Heart left ventricle (tissue), 16 donors: ENCODE measurements at regions of chr6 and their contacts with region 1.

Region 1: DNA sequence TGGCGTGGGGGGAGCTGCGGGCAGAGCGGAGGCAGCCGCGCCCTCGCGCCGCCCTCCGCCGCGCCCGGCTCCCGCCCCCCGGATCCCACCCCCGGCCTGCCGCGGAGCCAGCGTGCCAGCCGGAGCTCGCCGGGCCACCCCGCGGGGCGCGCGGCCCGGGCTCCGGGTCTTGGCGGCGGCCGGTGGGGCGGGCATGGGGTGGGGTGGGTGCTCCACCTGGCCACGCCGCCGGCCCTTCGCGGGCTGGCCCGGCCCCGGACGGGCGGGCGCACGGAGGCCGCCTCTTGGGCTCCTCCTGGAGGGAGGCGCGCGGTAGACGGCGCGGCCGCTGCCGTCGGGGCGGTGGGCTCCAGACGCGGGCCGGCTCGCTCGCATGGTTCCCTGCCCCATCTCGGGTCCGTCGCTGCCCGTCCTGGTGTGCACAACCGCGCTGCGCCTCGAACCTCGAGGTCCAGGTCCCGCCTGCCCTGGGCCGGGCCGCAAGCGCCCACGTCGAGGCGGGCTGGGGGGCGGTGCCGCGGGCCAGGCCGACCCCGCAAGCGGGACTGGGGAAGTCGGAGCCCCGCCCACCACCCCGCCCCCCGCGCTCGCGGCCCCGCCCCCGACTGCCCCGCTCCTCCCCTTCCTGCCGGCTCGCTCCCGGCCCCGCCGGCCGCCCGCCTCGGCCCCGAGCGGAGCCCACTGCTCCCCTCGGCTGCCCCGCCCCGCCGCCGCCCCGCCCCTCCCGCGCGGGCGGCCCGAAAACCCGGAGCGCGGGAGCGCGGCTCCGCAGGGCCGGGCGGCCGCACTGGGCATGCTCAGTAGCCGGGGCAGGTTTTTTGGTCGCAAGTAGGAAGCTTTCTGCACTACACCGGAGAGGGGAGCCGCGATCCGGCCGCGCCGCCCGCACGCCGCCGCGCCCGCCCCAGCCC is at the start of gene CDYL:
- DNase-seq: peak; percentile 89 to 95 (median 91)
- ATAC-seq: peak; percentile 86 to 93 (median 90)
- H3K4me3 ChIP-seq: peak within 1 kb of the TSS; percentile 40 to 91 (median 73)
- H3K27ac ChIP-seq: peak within 1 kb of the TSS in 11 of 12 donors; percentile 65 to 90 (median 84)
- H3K4me1 ChIP-seq: peaks cover 0 to 34% (median 18%) of the 10 kb centered on the region in 12 donors
- H3K27me3 ChIP-seq: no peaks in the 10 kb centered on the region
- CTCF ChIP-seq: peak in 9 of 12 donors; percentile 6 to 56 (median 41)
- POLR2A ChIP-seq: no peak
- total RNA-seq, gene CDYL: 14.6 to 45.2 (median 31.4) TPM

Region 2: DNA sequence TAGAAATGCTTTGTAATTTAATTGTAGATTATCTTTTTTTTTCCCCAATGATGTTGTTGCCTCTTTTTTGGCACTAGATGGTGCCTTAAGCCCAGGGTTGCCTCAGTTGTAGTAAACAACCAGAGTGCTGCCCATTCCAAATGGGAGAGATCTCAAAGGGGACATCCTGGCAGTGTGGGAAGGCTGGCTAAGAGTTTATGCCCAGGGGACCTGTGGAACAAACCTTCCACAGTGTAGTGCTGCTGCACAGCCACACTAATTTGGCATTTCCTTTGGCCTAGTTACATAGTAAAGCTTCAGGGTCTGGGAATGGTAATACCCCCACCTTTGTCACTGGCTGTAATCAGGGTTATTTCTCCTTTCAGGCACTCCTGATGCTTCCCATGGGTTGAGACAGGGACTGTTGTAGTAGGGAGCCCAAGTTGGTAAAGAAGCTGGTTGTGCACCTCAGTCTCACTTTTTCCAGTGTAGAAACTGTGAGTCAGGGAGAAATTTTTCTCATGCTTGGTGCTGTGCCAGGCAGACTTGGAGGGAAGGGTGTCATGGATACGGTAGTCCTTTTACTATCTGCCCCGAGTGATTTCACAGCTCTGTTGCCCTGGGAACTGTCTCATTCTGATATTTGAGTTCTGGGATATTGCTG is 462.7 kb before region 1 on chr6:
- intact Hi-C with region 1: loop called in 3 of 10 experiments (anchors 5 to 10 kb)
- DNase-seq: peak in 3 of 5 donors; percentile 40 to 69 (median 44)
- ATAC-seq: peak; percentile 33 to 75 (median 56)
- H3K4me3 ChIP-seq: no peak overlapping the region
- H3K27ac ChIP-seq: peak overlapping the region in 9 of 12 donors; percentile 8 to 73 (median 39)
- H3K4me1 ChIP-seq: peaks cover 0 to 29% (median 20%) of the 10 kb centered on the region in 12 donors
- H3K27me3 ChIP-seq: no peaks in the 10 kb centered on the region
- CTCF ChIP-seq: peak in 11 of 12 donors; percentile 12 to 60 (median 50)
- POLR2A ChIP-seq: no peak

Region 3: GRCh38 chr6:4358414-4359114 is 417.3 kb before region 1 on chr6:
- intact Hi-C with region 1: loop called in 3 of 10 experiments (anchors 5 to 10 kb)
- DNase-seq: peak; percentile 88 to 97 (median 90)
- ATAC-seq: peak; percentile 93 to 98 (median 96)
- H3K4me3 ChIP-seq: peak overlapping the region in 1 of 12 donors; percentile 12
- H3K27ac ChIP-seq: peak overlapping the region; percentile 76 to 99 (median 90)
- H3K4me1 ChIP-seq: peaks cover 0 to 19% (median 9%) of the 10 kb centered on the region in 12 donors
- H3K27me3 ChIP-seq: no peaks in the 10 kb centered on the region
- CTCF ChIP-seq: no peak
- POLR2A ChIP-seq: peak in 1 of 2 donors; percentile 46

Region 4: GRCh38 chr6:4647414-4648365 is 128.1 kb before region 1 on chr6:
- intact Hi-C with region 1: loop called (anchors 1 to 10 kb)
- DNase-seq: peak; percentile 86 to 87 (median 87)
- ATAC-seq: peak; percentile 95 to 99 (median 98)
- H3K4me3 ChIP-seq: peak overlapping the region in 10 of 12 donors; percentile 2 to 51 (median 38)
- H3K27ac ChIP-seq: peak overlapping the region in 10 of 12 donors; percentile 27 to 65 (median 53)
- H3K4me1 ChIP-seq: peaks cover 0 to 14% (median 4%) of the 10 kb centered on the region in 12 donors
- H3K27me3 ChIP-seq: peaks cover 0 to 6% (median 0%) of the 10 kb centered on the region in 9 donors
- CTCF ChIP-seq: peak in 1 of 12 donors; percentile 8
- POLR2A ChIP-seq: no peak

Region 5: DNA sequence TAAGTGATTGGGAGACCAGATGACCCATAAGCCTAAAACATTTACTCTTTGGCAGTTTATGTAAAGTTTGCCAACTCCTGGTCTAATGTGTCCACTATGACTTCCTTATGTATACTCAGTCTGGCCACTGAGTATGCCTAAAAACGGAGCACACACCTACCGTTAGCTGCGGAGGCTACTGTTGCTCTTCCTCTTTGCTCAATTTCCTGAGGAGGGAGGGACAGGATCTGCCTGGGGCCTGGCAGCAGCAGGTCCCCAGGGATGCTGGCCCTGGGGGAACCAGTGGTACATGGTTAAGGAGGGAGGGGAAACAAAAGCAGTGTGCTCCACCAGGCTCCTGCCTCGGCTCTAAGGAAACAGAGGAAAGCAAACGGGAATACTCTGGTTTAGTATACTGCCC is 113.9 kb after region 1 on chr6:
- intact Hi-C with region 1: no loop called
- DNase-seq: peak in 2 of 5 donors; percentile 43 to 56
- ATAC-seq: peak in 3 of 4 donors; percentile 69 to 84 (median 73)
- H3K4me3 ChIP-seq: no peak overlapping the region
- H3K27ac ChIP-seq: no peak overlapping the region
- H3K4me1 ChIP-seq: peaks cover 0 to 27% (median 4%) of the 10 kb centered on the region in 12 donors
- H3K27me3 ChIP-seq: no peaks in the 10 kb centered on the region
- CTCF ChIP-seq: no peak
- POLR2A ChIP-seq: no peak

Region 6: GRCh38 chr6:5003604-5004372 is 227.9 kb after region 1 on chr6 and contains the start of gene RPP40:
- intact Hi-C with region 1: loop called in 1 of 10 experiments (anchors 10 kb)
- DNase-seq: peak; percentile 97 to 99 (median 97)
- ATAC-seq: peak; percentile 98 to 100 (median 100)
- H3K4me3 ChIP-seq: peak within 1 kb of the TSS; percentile 34 to 90 (median 70)
- H3K27ac ChIP-seq: peak within 1 kb of the TSS; percentile 60 to 96 (median 89)
- H3K4me1 ChIP-seq: peaks cover 0 to 8% (median 5%) of the 10 kb centered on the region in 12 donors
- H3K27me3 ChIP-seq: no peaks in the 10 kb centered on the region
- CTCF ChIP-seq: peak; percentile 77 to 96 (median 88)
- POLR2A ChIP-seq: peak in 1 of 2 donors; percentile 28
- total RNA-seq, gene RPP40: 1.8 to 7.0 (median 3.5) TPM